Tibial artery (tissue), 4 donors: ENCODE measurements at regions of chr12 and their contacts with region 1.

Region 1: GRCh38 chr12:11648831-11649702 is at the start of gene ETV6:
- DNase-seq: peak; percentile 80 to 82
- H3K4me3 ChIP-seq: peak within 1 kb of the TSS; percentile 88
- H3K27ac ChIP-seq: peak within 1 kb of the TSS; percentile 95
- H3K4me1 ChIP-seq: peaks cover 0 to 23% (median 14%) of the 10 kb centered on the region in 4 donors
- H3K27me3 ChIP-seq: no peaks in the 10 kb centered on the region
- CTCF ChIP-seq: peak in 1 of 2 experiments; percentile 13

Region 2: GRCh38 chr12:11746024-11746771 is 97.1 kb after region 1 on chr12:
- intact Hi-C with region 1: no loop called
- DNase-seq: no peak
- H3K4me3 ChIP-seq: no peak overlapping the region
- H3K27ac ChIP-seq: peak overlapping the region in 1 of 2 donors; percentile 31
- H3K4me1 ChIP-seq: peaks cover 0 to 90% (median 46%) of the 10 kb centered on the region in 4 donors
- H3K27me3 ChIP-seq: no peaks in the 10 kb centered on the region
- CTCF ChIP-seq: no peak

Region 3: GRCh38 chr12:11765817-11766794 is 117.0 kb after region 1 on chr12:
- intact Hi-C with region 1: loop called (anchors 10 kb)
- DNase-seq: no peak
- H3K4me3 ChIP-seq: no peak overlapping the region
- H3K27ac ChIP-seq: peak overlapping the region; percentile 84
- H3K4me1 ChIP-seq: peaks cover 0 to 99% (median 67%) of the 10 kb centered on the region in 4 donors
- H3K27me3 ChIP-seq: no peaks in the 10 kb centered on the region
- CTCF ChIP-seq: no peak

Region 4: GRCh38 chr12:11885261-11886038 is 236.4 kb after region 1 on chr12:
- intact Hi-C with region 1: loop called (anchors 10 kb)
- DNase-seq: no peak
- H3K4me3 ChIP-seq: no peak overlapping the region
- H3K27ac ChIP-seq: peak overlapping the region; percentile 9 to 56
- H3K4me1 ChIP-seq: peaks cover 0 to 43% (median 21%) of the 10 kb centered on the region in 4 donors
- H3K27me3 ChIP-seq: no peaks in the 10 kb centered on the region
- CTCF ChIP-seq: no peak

Region 5: DNA sequence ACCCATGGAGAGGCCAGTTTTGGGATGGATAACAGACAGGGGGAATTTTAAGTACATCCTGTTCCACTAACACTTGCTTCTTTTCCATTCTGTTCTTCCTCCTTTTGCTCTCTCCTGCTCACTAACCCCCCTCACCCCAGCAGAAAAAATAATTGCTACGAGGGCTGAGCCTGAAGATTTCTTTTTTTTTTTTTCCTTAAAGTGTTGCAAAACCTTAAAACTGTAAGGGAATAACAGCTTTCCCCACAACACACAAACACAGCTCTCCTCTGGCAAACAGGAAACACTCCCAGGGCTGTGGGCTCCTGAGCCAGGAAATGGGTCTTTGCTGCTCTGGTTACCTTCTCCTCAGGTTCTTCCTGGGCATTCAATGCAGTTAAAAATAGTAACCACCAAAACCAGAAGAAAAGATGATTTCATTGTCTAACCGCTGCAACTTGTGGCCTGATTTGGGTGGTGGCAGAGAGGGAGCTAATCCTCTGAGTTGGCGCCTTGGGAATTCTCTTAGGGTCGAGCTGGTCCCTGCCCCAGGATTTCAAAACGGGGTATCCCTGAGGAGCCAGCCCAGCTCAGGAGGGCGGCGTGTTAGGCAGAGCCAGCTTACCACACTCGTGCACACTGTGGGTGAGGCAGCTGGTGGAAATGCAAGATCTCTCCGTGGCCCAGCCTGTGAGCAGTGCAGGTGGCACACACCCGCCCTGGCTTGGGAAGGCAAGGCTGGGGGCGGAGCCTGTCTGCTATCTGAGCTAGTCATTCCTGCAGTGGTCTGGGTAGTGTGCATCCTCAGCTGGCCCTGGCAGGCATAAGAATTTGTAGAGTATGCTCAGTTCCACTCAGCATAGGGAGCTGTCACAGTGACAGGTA is 1530.4 kb after region 1 on chr12:
- intact Hi-C with region 1: loop called (anchors 5 kb)
- DNase-seq: peak in 1 of 2 donors; percentile 54
- H3K4me3 ChIP-seq: no peak overlapping the region
- H3K27ac ChIP-seq: peak overlapping the region; percentile 33 to 57
- H3K4me1 ChIP-seq: peaks cover 0 to 15% (median 6%) of the 10 kb centered on the region in 4 donors
- H3K27me3 ChIP-seq: no peaks in the 10 kb centered on the region
- CTCF ChIP-seq: no peak